CD4-positive, alpha-beta memory T cell (primary cell): ENCODE measurements at regions of chr15 and their contacts with region 1.

Region 1: GRCh38 chr15:65530314-65531122 is at the start of gene HACD3:
- DNase-seq: peak; percentile 83 to 90 (median 87)
- H3K4me3 ChIP-seq: peak within 1 kb of the TSS; percentile 52 to 93
- H3K4me3 Mint-ChIP-seq: peak within 1 kb of the TSS; percentile 83 to 90 (median 88)
- H3K27ac ChIP-seq: peak within 1 kb of the TSS; percentile 67
- H3K27ac Mint-ChIP-seq: peak within 1 kb of the TSS; percentile 55 to 95 (median 87)
- H3K4me1 ChIP-seq: peaks cover 24% of the 10 kb centered on the region
- H3K4me1 Mint-ChIP-seq: peaks cover 24 to 33% (median 30%) of the 10 kb centered on the region in 4 donors
- H3K27me3 ChIP-seq: no peaks in the 10 kb centered on the region
- H3K27me3 Mint-ChIP-seq: no peaks in the 10 kb centered on the region
- total RNA-seq, gene HACD3: 23.1 to 23.8 TPM

Region 2: DNA sequence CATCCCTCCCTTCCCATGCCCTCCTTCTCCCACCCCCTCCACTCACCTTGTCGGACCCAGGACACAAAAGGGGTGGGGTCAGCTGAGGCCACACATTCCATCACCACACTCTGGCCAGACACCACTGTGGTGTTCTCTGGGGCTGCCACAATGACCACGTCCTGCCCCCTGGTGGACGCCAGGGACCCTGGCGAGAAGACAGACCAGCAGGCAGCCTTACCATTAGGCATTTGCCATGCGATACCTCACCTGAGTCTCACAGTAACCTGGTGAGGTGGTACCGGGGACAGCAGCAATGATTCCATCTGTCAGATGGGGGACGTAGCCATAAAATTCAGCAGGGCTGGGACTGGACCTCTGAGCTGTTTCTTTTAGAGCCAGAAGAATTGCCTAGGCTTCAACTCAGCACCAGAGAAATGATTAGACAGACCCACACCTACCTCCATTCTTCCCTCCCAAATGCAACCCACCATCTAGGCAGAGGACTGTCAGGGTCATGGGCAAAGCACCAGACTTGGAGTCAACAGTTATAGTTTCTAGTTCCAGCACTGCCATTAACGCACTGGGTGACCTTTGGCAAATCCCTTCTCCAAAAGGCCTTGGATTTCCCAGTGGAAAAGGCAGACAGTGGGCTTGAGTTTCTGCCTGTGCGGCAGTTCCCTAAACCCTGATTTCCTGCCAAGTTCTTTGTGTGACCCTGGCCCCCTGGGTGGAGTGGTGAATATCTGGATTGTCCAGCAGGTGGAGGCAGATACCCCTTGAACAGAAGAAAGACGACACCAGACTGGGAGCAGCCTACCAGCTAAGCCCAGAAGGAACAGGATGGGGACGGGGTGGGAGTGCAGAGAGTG is 129.5 kb before region 1 on chr15:
- CTCF ChIA-PET with region 1: no interaction called
- POLR2A ChIA-PET with region 1: no interaction called
- intact Hi-C with region 1: no loop called
- DNase-seq: peak in 3 of 5 donors; percentile 17 to 26 (median 23)
- H3K4me3 ChIP-seq: no peak overlapping the region
- H3K4me3 Mint-ChIP-seq: no peak overlapping the region
- H3K27ac ChIP-seq: no peak overlapping the region
- H3K27ac Mint-ChIP-seq: peak overlapping the region in 1 of 7 donors; percentile 46
- H3K4me1 ChIP-seq: no peaks in the 10 kb centered on the region
- H3K4me1 Mint-ChIP-seq: peaks cover 6 to 10% (median 7%) of the 10 kb centered on the region in 4 donors
- H3K27me3 ChIP-seq: peaks cover 3% of the 10 kb centered on the region
- H3K27me3 Mint-ChIP-seq: peaks cover 36 to 47% of the 10 kb centered on the region in 2 donors

Region 3: GRCh38 chr15:65516997-65517865 is 13.3 kb before region 1 on chr15 and contains the start of gene DPP8:
- CTCF ChIA-PET with region 1: interaction called, 4 read pairs
- POLR2A ChIA-PET with region 1: interaction called, 36 read pairs
- intact Hi-C with region 1: loop called (anchors 1 kb)
- DNase-seq: peak; percentile 92 to 93 (median 92)
- H3K4me3 ChIP-seq: peak within 1 kb of the TSS; percentile 86 to 96
- H3K4me3 Mint-ChIP-seq: peak within 1 kb of the TSS; percentile 85 to 100 (median 95)
- H3K27ac ChIP-seq: peak within 1 kb of the TSS; percentile 85
- H3K27ac Mint-ChIP-seq: peak within 1 kb of the TSS; percentile 82 to 97 (median 97)
- H3K4me1 ChIP-seq: peaks cover 52% of the 10 kb centered on the region
- H3K4me1 Mint-ChIP-seq: peaks cover 23 to 53% (median 38%) of the 10 kb centered on the region in 4 donors
- H3K27me3 ChIP-seq: no peaks in the 10 kb centered on the region
- H3K27me3 Mint-ChIP-seq: no peaks in the 10 kb centered on the region
- total RNA-seq, gene DPP8: 54.0 to 58.6 TPM

Region 4: GRCh38 chr15:65595960-65596359 is 65.4 kb after region 1 on chr15:
- CTCF ChIA-PET with region 1: no interaction called
- POLR2A ChIA-PET with region 1: no interaction called
- intact Hi-C with region 1: no loop called
- DNase-seq: peak in 2 of 5 donors; percentile 5 to 17
- H3K4me3 ChIP-seq: no peak overlapping the region
- H3K4me3 Mint-ChIP-seq: no peak overlapping the region
- H3K27ac ChIP-seq: no peak overlapping the region
- H3K27ac Mint-ChIP-seq: no peak overlapping the region
- H3K4me1 ChIP-seq: no peaks in the 10 kb centered on the region
- H3K4me1 Mint-ChIP-seq: no peaks in the 10 kb centered on the region
- H3K27me3 ChIP-seq: no peaks in the 10 kb centered on the region
- H3K27me3 Mint-ChIP-seq: no peaks in the 10 kb centered on the region